Esophagus muscularis mucosa (tissue), 4 donors: ENCODE measurements at regions of chr14 and their contacts with region 1.

Region 1: GRCh38 chr14:58152014-58152857 is at the start of gene ARMH4:
- DNase-seq: peak; percentile 94
- H3K4me3 ChIP-seq: peak within 1 kb of the TSS; percentile 70 to 87 (median 81)
- H3K27ac ChIP-seq: peak within 1 kb of the TSS; percentile 72 to 80 (median 74)
- H3K4me1 ChIP-seq: peaks cover 10 to 23% (median 16%) of the 10 kb centered on the region in 4 donors
- H3K27me3 ChIP-seq: no peaks in the 10 kb centered on the region
- CTCF ChIP-seq: peak in 2 of 3 experiments; percentile 12 to 27
- EP300 ChIP-seq: no peak
- POLR2A ChIP-seq: no peak
- total RNA-seq, gene ARMH4: 5.0 to 8.0 (median 5.8) TPM

Region 2: GRCh38 chr14:58107947-58108552 is 44.2 kb before region 1 on chr14:
- intact Hi-C with region 1: loop called (anchors 5 kb)
- DNase-seq: no peak
- H3K4me3 ChIP-seq: no peak overlapping the region
- H3K27ac ChIP-seq: no peak overlapping the region
- H3K4me1 ChIP-seq: peaks cover 0 to 12% (median 6%) of the 10 kb centered on the region in 4 donors
- H3K27me3 ChIP-seq: no peaks in the 10 kb centered on the region
- CTCF ChIP-seq: peak; percentile 80 to 84 (median 81)
- EP300 ChIP-seq: no peak
- POLR2A ChIP-seq: no peak

Region 3: DNA sequence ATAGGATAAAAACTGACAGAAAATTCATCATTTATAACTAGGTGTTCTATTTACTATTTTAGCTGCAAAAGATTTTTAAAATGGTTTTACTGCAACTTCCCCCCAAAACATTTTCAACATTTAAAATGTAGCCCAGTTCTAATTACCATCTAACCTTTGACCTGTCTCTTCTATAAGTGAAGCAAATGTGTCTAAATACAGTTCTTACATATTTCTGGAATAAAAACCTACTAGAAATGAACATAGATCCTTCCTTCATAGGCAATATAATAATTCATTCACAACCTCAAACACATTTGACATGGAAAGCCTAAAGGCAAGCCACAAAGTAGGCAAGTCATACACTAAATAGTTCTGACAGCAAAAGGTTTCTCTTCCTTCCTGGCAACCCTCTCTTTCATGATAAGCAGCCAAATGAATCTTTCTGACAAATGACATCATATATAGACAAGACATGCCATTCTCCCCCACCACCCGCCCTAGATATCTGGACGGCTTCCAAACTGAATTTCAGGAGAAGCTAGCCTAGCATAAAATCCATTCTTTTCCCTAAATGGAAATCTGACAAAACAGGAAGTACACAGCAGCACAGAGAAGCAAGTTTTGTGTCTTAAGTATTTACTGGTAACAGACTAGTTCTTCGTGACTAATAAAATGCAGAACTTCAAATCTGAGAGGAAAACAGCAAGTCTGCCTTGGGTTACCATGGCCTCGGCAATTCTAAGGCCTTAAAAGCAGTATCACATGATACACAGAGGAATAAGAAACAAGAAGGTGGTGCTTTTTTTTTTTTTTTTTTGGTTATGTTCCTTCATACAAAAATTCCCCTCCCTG is 128.9 kb after region 1 on chr14:
- intact Hi-C with region 1: loop called (anchors 5 kb)
- DNase-seq: no peak
- H3K4me3 ChIP-seq: peak overlapping the region in 3 of 4 donors; percentile 12 to 24 (median 21)
- H3K27ac ChIP-seq: peak overlapping the region; percentile 74 to 78 (median 75)
- H3K4me1 ChIP-seq: peaks cover 33 to 63% (median 47%) of the 10 kb centered on the region in 4 donors
- H3K27me3 ChIP-seq: no peaks in the 10 kb centered on the region
- CTCF ChIP-seq: no peak
- EP300 ChIP-seq: no peak
- POLR2A ChIP-seq: no peak